HCT116 (cell line): ENCODE measurements at regions of chr13 and their contacts with region 1.

Region 1: DNA sequence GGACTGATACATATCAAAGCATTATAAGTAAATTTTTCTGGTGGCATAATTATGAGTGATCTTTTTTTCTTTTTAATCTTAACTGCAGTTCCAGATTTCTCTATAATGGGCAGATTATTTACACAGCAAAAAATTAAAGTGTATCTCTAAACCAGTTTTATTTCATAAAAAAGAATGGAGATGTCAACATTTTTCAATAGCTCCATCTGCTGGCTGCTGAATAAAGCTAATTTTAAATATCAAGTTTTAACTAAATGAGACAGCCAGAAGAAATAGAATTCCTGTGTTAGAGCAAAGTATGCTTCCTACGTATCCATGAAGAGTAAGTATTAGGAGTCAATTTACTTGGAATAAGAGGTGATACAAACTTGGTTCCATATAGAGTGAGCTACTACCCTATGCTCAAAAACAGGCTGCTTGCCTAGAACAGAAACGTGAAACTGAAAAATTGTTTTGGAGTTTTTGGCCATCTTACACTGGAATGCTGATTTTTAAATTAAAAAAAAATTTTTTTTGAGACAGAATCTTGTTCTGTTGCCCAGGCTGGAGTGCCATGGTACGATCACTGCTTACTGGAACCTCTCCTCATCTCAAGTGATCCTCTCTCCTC is 5.0 kb upstream of the PDS5B start:
- DNase-seq: peak; percentile 10
- ATAC-seq: no peak
- H3K4me3 ChIP-seq: no peak overlapping the region
- H3K27ac ChIP-seq: no peak overlapping the region
- H3K4me1 ChIP-seq: peaks cover 4 to 8% of the 10 kb centered on the region in 2 experiments
- H3K27me3 ChIP-seq: no peaks in the 10 kb centered on the region
- CTCF ChIP-seq: peak; percentile 44 to 57 (median 55); a peak in 5 of 6 replicates
- POLR2A ChIP-seq: no peak
- RAD21 ChIP-seq: peak; percentile 58

Region 2: GRCh38 chr13:31824705-31825517 is 756.4 kb before region 1 on chr13:
- CTCF ChIA-PET with region 1: interaction called, 3 read pairs
- POLR2A ChIA-PET with region 1: no interaction called
- RAD21 ChIA-PET with region 1: no interaction called
- intact Hi-C with region 1: loop called (anchors 5 kb)
- DNase-seq: no peak
- ATAC-seq: no peak
- H3K4me3 ChIP-seq: no peak overlapping the region
- H3K27ac ChIP-seq: no peak overlapping the region
- H3K4me1 ChIP-seq: no peaks in the 10 kb centered on the region
- H3K27me3 ChIP-seq: peaks cover 12% of the 10 kb centered on the region
- CTCF ChIP-seq: peak in 1 of 3 experiments; percentile 32; a peak in 1 of 6 replicates
- POLR2A ChIP-seq: no peak
- RAD21 ChIP-seq: peak; percentile 32; the same call in 1 of the 2 replicates

Region 3: GRCh38 chr13:32019612-32020233 is 561.6 kb before region 1 on chr13:
- CTCF ChIA-PET with region 1: no interaction called
- POLR2A ChIA-PET with region 1: no interaction called
- RAD21 ChIA-PET with region 1: no interaction called
- intact Hi-C with region 1: loop called (anchors 2 kb)
- DNase-seq: peak; percentile 37
- ATAC-seq: peak; percentile 90
- H3K4me3 ChIP-seq: no peak overlapping the region
- H3K27ac ChIP-seq: no peak overlapping the region
- H3K4me1 ChIP-seq: no peaks in the 10 kb centered on the region
- H3K27me3 ChIP-seq: no peaks in the 10 kb centered on the region
- CTCF ChIP-seq: peak; percentile 37 to 78 (median 78); a peak in 5 of 6 replicates
- POLR2A ChIP-seq: no peak
- RAD21 ChIP-seq: peak; percentile 61

Region 4: GRCh38 chr13:32246468-32246867 is 334.8 kb before region 1 on chr13:
- CTCF ChIA-PET with region 1: interaction called, 10 read pairs
- POLR2A ChIA-PET with region 1: no interaction called
- RAD21 ChIA-PET with region 1: interaction called in 1 of 2 experiments, 4 read pairs
- intact Hi-C with region 1: no loop called
- DNase-seq: peak; percentile 66
- ATAC-seq: peak; percentile 100
- H3K4me3 ChIP-seq: no peak overlapping the region
- H3K27ac ChIP-seq: no peak overlapping the region
- H3K4me1 ChIP-seq: peaks cover 0 to 5% of the 10 kb centered on the region in 2 experiments; a peak in 1 of 4 replicates
- H3K27me3 ChIP-seq: no peaks in the 10 kb centered on the region
- CTCF ChIP-seq: peak; percentile 49 to 89 (median 79); a peak in 5 of 6 replicates
- POLR2A ChIP-seq: no peak
- RAD21 ChIP-seq: peak; percentile 53

Region 5: GRCh38 chr13:32381539-32381938 is 199.7 kb before region 1 on chr13:
- CTCF ChIA-PET with region 1: interaction called, 4 read pairs
- POLR2A ChIA-PET with region 1: no interaction called
- RAD21 ChIA-PET with region 1: no interaction called
- intact Hi-C with region 1: loop called (anchors 5 kb)
- DNase-seq: peak; percentile 2
- ATAC-seq: peak; percentile 49
- H3K4me3 ChIP-seq: no peak overlapping the region
- H3K27ac ChIP-seq: no peak overlapping the region
- H3K4me1 ChIP-seq: no peaks in the 10 kb centered on the region
- H3K27me3 ChIP-seq: no peaks in the 10 kb centered on the region
- CTCF ChIP-seq: peak in 2 of 3 experiments; percentile 25 to 36; a peak in 3 of 6 replicates
- POLR2A ChIP-seq: no peak
- RAD21 ChIP-seq: peak; percentile 32

Region 6: GRCh38 chr13:32472194-32472621 is 109.1 kb before region 1 on chr13:
- CTCF ChIA-PET with region 1: interaction called, 11 read pairs
- POLR2A ChIA-PET with region 1: no interaction called
- RAD21 ChIA-PET with region 1: no interaction called
- intact Hi-C with region 1: loop called (anchors 5 kb)
- DNase-seq: no peak
- ATAC-seq: no peak
- H3K4me3 ChIP-seq: no peak overlapping the region
- H3K27ac ChIP-seq: no peak overlapping the region
- H3K4me1 ChIP-seq: no peaks in the 10 kb centered on the region
- H3K27me3 ChIP-seq: no peaks in the 10 kb centered on the region
- CTCF ChIP-seq: no peak
- POLR2A ChIP-seq: no peak
- RAD21 ChIP-seq: no peak